Heart left ventricle (tissue), 16 donors: ENCODE measurements at regions of chr11 and their contacts with region 1.

Region 1: GRCh38 chr11:43687120-43687791 is 6.7 kb downstream of the HSD17B12 start:
- DNase-seq: peak; percentile 56 to 81 (median 66)
- ATAC-seq: peak; percentile 95 to 97 (median 96)
- H3K4me3 ChIP-seq: no peak overlapping the region
- H3K27ac ChIP-seq: peak overlapping the region; percentile 67 to 87 (median 78)
- H3K4me1 ChIP-seq: peaks cover 3 to 78% (median 42%) of the 10 kb centered on the region in 12 donors
- H3K27me3 ChIP-seq: no peaks in the 10 kb centered on the region
- CTCF ChIP-seq: no peak
- POLR2A ChIP-seq: peak in 1 of 2 donors; percentile 20

Region 2: DNA sequence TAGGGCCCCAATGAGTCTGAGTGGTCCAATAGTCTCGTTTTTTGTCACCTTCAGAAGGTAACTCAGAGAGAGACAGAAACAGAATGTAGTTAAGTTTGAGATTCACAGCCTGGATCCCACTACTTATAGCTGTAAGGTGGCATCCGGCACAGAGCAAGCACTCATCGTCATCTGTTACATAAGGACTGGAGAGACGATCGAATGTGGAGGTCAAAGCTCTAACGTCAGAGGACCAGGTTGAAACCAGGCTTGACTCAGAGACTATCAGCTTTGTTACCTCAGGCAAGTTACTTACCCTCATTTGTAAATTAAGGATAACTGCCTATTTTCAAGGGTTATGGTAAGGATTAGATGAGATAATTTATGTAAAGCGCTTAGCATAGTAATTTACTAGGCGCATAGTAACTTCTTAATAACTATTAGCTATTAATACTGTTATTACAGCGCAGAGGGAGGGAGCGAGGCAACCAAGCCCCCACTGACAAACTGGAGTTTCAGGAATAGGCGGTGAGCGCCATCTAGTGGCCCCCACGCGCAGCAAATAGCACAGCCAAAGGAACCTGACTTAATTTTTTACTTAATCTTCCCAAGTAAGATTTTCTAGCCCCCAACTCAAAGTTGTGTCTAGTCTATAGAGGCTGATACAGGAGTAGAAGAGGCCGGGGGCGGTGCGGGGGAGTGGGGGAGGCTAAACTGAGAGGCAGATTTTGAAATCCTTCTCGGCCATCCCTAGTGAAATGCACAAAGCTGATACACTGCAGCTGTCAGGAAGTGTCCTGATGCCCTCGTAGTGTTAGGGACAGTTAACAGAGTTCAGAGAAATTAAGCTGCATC is 404.4 kb before region 1 on chr11:
- intact Hi-C with region 1: no loop called
- DNase-seq: peak in 2 of 5 donors; percentile 33 to 73
- ATAC-seq: peak in 2 of 4 donors; percentile 18 to 60
- H3K4me3 ChIP-seq: no peak overlapping the region
- H3K27ac ChIP-seq: no peak overlapping the region
- H3K4me1 ChIP-seq: no peaks in the 10 kb centered on the region
- H3K27me3 ChIP-seq: peaks cover 0 to 45% (median 4%) of the 10 kb centered on the region in 9 donors
- CTCF ChIP-seq: peak; percentile 76 to 93 (median 90)
- POLR2A ChIP-seq: no peak

Region 3: DNA sequence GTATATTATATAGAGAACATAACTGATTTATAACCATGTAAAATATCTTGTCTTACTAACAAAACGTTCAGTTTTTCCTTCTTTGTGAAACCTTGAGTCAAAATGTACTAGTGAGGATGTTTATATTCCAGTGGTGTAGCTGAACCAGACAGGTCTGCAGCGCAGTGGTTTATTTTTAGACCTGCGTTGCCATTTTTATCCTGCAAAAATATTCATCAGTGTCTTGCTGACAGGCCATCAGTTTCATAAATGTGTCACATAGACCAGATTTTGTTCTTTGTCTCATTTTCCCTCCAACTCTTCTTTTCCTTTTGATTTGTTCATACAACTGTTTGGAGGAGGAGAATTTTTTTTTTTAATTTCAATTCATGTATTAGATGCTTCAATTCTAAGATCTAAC is 36.4 kb after region 1 on chr11:
- intact Hi-C with region 1: loop called in 1 of 10 experiments (anchors 5 kb)
- DNase-seq: no peak
- ATAC-seq: peak; percentile 53 to 77 (median 62)
- H3K4me3 ChIP-seq: no peak overlapping the region
- H3K27ac ChIP-seq: peak overlapping the region in 4 of 12 donors; percentile 22 to 66 (median 46)
- H3K4me1 ChIP-seq: peaks cover 0 to 25% (median 7%) of the 10 kb centered on the region in 12 donors
- H3K27me3 ChIP-seq: no peaks in the 10 kb centered on the region
- CTCF ChIP-seq: no peak
- POLR2A ChIP-seq: no peak

Region 4: DNA sequence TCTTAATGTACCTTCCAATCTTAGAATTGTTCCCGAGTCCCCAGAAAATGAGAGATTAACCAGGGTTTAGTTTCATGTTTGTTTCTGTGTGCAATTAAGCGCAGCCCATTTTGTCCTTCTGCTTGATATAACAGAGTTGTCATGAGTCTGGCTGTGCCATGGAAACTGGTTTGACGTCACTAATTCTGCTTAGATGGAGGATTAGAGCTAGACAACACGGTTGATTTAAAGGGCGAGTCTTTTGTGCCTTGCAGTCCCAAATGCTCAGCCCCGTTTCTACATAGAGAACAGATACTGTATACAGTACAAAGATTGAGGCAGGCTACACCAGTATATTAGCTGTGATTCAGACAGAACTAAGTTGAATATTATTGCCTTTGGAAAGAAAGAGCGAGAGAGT is 147.8 kb after region 1 on chr11:
- intact Hi-C with region 1: no loop called
- DNase-seq: no peak
- ATAC-seq: no peak
- H3K4me3 ChIP-seq: no peak overlapping the region
- H3K27ac ChIP-seq: no peak overlapping the region
- H3K4me1 ChIP-seq: peaks cover 0 to 27% (median 4%) of the 10 kb centered on the region in 12 donors
- H3K27me3 ChIP-seq: no peaks in the 10 kb centered on the region
- CTCF ChIP-seq: no peak
- POLR2A ChIP-seq: no peak